ENCODE measurements at regions of chr5 and their contacts with region 1.

Region 1: DNA sequence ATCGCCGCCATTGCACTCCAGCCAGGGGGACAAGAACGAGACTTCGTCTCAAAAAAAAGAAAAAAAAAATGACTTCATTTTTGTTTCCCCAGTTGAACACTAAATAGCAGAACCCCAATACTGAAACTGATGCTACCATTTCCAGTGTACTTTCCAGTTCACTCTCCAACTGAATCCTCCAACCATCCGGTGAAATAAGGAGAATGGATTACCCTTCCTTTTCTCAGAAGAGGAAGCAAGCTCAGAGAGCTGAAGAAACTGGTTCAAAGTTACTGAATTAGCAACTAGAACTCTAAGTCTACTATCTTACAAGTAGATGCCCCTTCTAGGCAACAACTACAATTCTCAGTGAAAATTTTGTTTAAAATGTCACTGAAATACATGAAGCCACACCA is 3.9 kb downstream of the FAM13B start:
- DNase-seq: no peak
- ATAC-seq: no peak
- H3K4me3 Mint-ChIP-seq: no peak overlapping the region
- H3K27ac Mint-ChIP-seq: no peak overlapping the region
- H3K4me1 Mint-ChIP-seq: peaks cover 73% of the 10 kb centered on the region
- H3K27me3 Mint-ChIP-seq: no peaks in the 10 kb centered on the region

Region 2: DNA sequence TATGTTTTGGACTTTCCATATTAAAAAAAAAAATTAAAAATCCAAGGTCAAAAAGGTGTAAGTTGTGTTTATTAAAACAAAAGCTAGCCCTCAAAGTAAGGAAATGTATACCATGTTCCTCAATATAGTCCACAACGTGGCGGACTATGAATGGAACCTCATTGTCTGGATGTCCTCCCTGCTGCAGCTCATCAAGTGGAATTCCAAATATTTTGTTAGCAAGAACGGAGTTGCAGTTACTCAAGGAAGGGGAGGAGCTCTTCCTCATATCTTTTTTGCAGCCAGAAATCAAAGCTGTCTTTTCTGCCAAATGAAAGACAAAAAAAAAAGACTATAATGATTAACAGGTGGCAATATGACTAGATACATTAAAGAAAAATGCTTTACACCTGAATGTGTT is 10.1 kb before region 1 on chr5:
- CTCF ChIA-PET with region 1: interaction called, 13 read pairs
- POLR2A ChIA-PET with region 1: no interaction called
- intact Hi-C with region 1: no loop called
- DNase-seq: no peak
- ATAC-seq: no peak
- H3K4me3 Mint-ChIP-seq: no peak overlapping the region
- H3K27ac Mint-ChIP-seq: no peak overlapping the region
- H3K4me1 Mint-ChIP-seq: peaks cover 23% of the 10 kb centered on the region
- H3K27me3 Mint-ChIP-seq: no peaks in the 10 kb centered on the region

Region 3: GRCh38 chr5:138258704-138259292 is 229.8 kb after region 1 on chr5:
- CTCF ChIA-PET with region 1: no interaction called
- POLR2A ChIA-PET with region 1: no interaction called
- intact Hi-C with region 1: no loop called
- DNase-seq: no peak
- ATAC-seq: no peak
- H3K4me3 Mint-ChIP-seq: no peak overlapping the region
- H3K27ac Mint-ChIP-seq: no peak overlapping the region
- H3K4me1 Mint-ChIP-seq: peaks cover 5% of the 10 kb centered on the region
- H3K27me3 Mint-ChIP-seq: no peaks in the 10 kb centered on the region